Activated CD8-positive, alpha-beta memory T cell treated with anti-CD3 and anti-CD28 coated beads, Interleukin-2, amount 10 ng/mL, durations not matched to agents 7 days and 5 days (primary cell): ENCODE measurements at regions of chr14 and their contacts with region 1.

Region 1: GRCh38 chr14:22852940-22853767 is 16.8 kb downstream of the MMP14 start:
- DNase-seq: peak; percentile 93
- ATAC-seq: peak; percentile 87
- H3K4me3 Mint-ChIP-seq: peak overlapping the region; percentile 70
- H3K27ac Mint-ChIP-seq: peak overlapping the region; percentile 79
- H3K4me1 Mint-ChIP-seq: peaks cover 37% of the 10 kb centered on the region
- H3K27me3 Mint-ChIP-seq: peaks cover 32% of the 10 kb centered on the region

Region 2: DNA sequence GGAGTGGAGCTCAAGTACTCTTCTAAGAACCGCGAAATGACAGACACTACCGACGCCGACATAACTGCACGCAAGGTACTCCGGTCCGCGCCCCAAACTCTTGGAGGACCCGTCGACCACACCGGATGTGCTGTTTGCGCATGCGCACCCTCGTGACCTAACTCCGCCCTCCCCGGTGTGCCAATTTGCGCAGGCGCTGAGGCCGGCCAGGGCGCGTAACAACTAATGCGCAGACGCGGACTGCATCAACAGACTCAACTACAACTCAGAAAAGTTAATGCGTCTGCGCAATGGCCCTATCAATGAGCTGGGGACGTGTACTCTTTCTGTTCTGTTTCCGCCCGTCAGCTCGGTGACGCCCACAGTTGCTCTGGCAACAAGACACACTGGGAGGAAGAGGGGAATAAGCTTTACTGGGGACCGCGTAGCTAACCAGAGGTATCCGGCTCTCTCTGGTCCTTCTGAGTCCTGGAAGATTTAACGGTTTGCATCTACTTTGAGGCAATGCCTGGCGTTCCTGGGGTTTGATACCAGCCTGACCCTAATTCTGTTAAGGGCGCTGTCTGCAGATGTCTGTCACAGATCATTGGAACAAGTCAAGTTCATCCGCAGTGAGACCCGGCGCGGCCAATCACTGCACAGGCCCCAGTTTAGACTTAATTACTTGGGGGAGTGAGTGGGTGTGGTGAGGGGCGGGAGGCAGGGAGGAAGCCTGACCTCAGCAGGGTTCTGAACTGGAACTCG is 263.9 kb before region 1 on chr14 and contains the start of gene DAD1:
- CTCF ChIA-PET with region 1: interaction called, 17 read pairs
- DNase-seq: peak; percentile 100
- ATAC-seq: peak; percentile 90
- H3K4me3 Mint-ChIP-seq: peak within 1 kb of the TSS; percentile 86
- H3K27ac Mint-ChIP-seq: peak within 1 kb of the TSS; percentile 100
- H3K4me1 Mint-ChIP-seq: peaks cover 56% of the 10 kb centered on the region
- H3K27me3 Mint-ChIP-seq: peaks cover 2% of the 10 kb centered on the region
- total RNA-seq, gene DAD1: 115 to 185 TPM

Region 3: DNA sequence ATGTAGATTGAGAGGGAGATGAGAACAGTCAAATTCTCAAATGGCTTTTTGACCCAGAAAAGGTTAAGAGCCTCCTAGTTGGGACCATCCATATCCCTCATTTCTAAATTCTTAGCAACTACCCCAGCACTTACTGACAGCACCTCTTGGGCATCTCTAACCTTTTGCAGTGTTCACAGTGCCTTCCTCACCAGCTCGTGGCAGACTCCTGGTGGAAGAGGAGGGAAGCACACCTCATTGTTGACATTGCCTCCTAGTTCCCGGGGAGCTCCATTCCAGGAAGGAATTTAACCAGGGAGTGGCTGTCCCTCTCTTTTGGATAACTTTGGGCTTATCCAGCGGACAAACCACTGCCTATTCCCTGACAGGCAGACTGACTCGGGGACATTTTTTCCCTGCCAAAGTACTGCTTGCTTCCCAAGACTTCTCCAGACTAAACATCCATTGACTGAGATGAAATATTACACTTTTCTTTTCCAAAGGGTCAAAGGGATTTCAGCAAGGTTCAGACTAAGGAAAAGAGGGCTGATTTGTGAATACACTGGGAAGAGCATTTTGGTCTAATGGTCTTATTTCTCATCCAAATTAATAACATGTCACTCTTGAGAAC is 200.0 kb before region 1 on chr14:
- CTCF ChIA-PET with region 1: interaction called, 20 read pairs
- DNase-seq: peak; percentile 65
- ATAC-seq: peak; percentile 81
- H3K4me3 Mint-ChIP-seq: no peak overlapping the region
- H3K27ac Mint-ChIP-seq: no peak overlapping the region
- H3K4me1 Mint-ChIP-seq: peaks cover 18% of the 10 kb centered on the region
- H3K27me3 Mint-ChIP-seq: no peaks in the 10 kb centered on the region

Region 4: GRCh38 chr14:22780105-22780679 is 73.0 kb before region 1 on chr14:
- CTCF ChIA-PET with region 1: no interaction called
- DNase-seq: no peak
- ATAC-seq: no peak
- H3K4me3 Mint-ChIP-seq: no peak overlapping the region
- H3K27ac Mint-ChIP-seq: no peak overlapping the region
- H3K4me1 Mint-ChIP-seq: no peaks in the 10 kb centered on the region
- H3K27me3 Mint-ChIP-seq: no peaks in the 10 kb centered on the region

Region 5: DNA sequence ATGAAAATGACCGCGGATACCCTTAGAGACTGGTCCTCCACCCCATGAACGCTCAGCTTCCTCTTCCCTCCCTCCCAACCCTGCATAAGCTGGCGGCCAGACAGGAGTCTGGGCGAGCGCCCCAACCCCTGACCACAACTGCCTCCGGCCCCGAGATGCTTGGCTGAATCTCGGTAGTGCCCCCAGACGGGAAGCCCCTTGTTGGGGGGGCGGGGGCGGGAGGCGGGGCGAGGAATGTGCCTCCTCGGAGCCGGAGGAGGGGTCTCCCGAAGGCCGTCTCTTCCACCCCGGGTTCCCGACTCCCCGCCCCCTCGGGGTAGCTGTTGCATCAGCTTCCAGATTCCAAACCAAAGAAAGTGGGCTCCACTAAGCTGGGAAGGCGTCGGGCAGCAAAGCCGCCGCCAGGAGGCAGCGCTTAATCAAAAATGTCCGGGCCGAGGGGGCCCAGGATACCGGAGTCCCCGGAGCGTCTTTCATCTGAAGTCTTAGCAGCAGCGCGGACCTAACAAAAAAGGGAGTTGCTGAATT is 30.5 kb before region 1 on chr14:
- CTCF ChIA-PET with region 1: interaction called, 239 read pairs
- DNase-seq: peak; percentile 81
- ATAC-seq: peak; percentile 94
- H3K4me3 Mint-ChIP-seq: peak overlapping the region; percentile 30
- H3K27ac Mint-ChIP-seq: no peak overlapping the region
- H3K4me1 Mint-ChIP-seq: peaks cover 29% of the 10 kb centered on the region
- H3K27me3 Mint-ChIP-seq: peaks cover 28% of the 10 kb centered on the region

Region 6: GRCh38 chr14:22836301-22837113 is 16.6 kb before region 1 on chr14 and contains the start of gene MMP14:
- CTCF ChIA-PET with region 1: interaction called, 143 read pairs
- DNase-seq: no peak
- ATAC-seq: no peak
- H3K4me3 Mint-ChIP-seq: no peak within 1 kb of the TSS
- H3K27ac Mint-ChIP-seq: no peak within 1 kb of the TSS
- H3K4me1 Mint-ChIP-seq: peaks cover 14% of the 10 kb centered on the region
- H3K27me3 Mint-ChIP-seq: peaks cover 16% of the 10 kb centered on the region
- total RNA-seq, gene MMP14: 1.3 to 2.5 TPM

Region 7: DNA sequence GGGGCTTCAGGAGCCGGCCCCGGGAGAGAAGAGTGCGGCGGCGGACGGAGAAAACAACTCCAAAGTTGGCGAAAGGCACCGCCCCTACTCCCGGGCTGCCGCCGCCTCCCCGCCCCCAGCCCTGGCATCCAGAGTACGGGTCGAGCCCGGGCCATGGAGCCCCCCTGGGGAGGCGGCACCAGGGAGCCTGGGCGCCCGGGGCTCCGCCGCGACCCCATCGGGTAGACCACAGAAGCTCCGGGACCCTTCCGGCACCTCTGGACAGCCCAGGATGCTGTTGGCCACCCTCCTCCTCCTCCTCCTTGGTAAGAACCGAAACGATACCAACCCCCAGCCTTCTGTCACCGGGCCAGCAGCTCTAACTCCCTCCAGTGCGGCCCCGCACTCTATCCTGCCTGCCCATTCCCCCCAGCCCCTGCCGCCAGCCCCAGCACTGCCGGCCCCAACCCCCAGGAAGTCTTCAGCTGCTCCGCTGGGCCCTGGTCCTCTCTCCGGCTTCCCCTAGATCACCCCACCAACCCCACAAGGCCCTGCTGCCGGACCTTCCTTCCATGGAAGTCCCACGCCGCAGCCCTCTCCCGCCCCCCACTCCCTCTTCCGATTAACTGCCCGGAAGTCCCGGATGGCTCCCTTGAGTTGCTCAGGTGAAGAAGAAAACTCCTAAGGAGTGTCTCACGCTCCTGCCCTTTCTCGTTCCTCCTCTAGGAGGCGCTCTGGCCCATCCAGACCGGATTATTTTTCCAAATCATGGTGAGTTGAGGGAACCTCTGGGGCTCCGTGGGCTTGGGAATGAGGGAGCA is 19.1 kb after region 1 on chr14:
- CTCF ChIA-PET with region 1: interaction called, 61 read pairs
- DNase-seq: peak; percentile 80
- ATAC-seq: peak; percentile 43
- H3K4me3 Mint-ChIP-seq: peak overlapping the region; percentile 88
- H3K27ac Mint-ChIP-seq: peak overlapping the region; percentile 98
- H3K4me1 Mint-ChIP-seq: peaks cover 32% of the 10 kb centered on the region
- H3K27me3 Mint-ChIP-seq: no peaks in the 10 kb centered on the region

Region 8: DNA sequence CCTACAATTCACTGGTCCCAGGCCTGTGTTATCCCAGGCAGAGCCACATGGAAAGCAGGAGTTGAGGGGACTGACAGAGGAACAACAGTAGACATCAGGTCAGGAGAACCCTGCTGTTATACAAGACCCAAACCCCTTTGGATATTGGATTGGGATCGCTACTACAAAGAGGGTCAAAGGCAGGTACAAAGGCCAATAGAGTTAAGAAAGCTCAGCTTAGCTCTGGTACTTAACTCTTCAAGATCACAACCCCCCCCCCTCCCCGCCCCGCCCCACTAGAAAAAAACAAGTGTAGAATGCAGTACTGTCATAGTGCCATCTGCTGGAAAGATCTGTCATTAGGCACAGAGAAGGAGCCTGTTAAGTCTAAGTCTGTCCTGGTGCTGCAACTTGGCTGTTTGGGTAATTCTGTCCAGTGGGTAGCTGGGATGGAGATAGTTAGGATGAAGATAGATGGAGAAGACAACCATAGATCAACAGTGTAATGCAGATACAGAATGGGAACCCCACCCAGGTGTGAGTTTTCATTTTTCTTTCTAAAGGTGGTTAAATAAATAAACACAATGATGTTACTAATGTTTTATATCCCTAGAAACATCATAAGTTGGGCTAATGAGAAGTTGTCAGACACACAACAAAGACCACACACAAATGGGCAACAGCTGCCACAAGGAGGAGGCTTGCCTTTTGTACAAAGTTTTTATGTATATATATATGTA is 47.1 kb after region 1 on chr14:
- CTCF ChIA-PET with region 1: interaction called, 49 read pairs
- DNase-seq: peak; percentile 71
- ATAC-seq: peak; percentile 87
- H3K4me3 Mint-ChIP-seq: no peak overlapping the region
- H3K27ac Mint-ChIP-seq: peak overlapping the region; percentile 61
- H3K4me1 Mint-ChIP-seq: peaks cover 18% of the 10 kb centered on the region
- H3K27me3 Mint-ChIP-seq: no peaks in the 10 kb centered on the region